MCF 10A (cell line): ENCODE measurements at regions of chr7 and their contacts with region 1.

Region 1: DNA sequence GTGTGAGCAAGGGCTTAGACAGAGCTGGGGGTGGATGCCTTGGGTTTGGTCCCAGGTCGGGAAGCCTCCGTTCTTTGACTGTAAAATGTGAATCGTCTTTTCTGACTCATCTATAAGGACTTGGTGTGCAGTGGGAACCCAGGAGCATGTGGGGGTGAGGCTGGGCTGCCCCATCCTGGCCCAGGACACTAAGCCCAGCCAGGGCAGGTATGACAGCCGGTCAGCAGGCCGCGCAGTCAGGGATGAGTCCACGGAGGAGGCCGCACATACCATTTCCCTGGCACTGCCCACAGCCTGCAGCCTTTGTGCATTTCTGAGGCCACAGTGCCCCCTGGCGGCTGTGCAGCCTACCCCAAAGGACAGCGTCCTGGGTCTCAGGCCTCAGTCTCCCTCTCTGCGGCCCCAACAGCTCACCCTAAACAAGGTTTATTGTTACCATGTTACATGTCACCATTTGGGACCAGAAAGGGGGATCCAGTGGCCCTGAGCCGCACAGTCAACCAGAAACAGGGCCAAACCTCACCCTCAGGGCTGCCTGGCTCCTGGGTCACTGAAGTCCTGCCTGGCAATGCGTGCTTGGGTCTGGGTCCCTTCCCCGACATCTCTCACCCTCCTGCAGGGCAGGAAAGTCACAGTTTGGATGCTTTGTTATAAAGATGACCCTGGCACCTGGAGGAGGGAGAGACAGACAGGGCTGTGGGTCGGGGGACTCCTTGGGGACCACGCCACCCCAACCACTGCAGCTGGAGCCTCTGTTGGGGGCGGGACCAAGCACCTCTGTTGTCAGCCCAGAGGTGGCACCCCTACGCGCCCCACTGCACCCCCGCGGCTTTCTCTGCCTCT is 14.4 kb upstream of the SH2B2 start:
- DNase-seq: peak; percentile 84
- H3K4me3 Mint-ChIP-seq: no peak overlapping the region
- H3K27ac Mint-ChIP-seq: no peak overlapping the region
- H3K4me1 Mint-ChIP-seq: peaks cover 13% of the 10 kb centered on the region
- H3K27me3 Mint-ChIP-seq: peaks cover 14% of the 10 kb centered on the region
- CTCF ChIP-seq: peak; percentile 94

Region 2: GRCh38 chr7:101542527-101543241 is 729.6 kb before region 1 on chr7:
- CTCF ChIA-PET with region 1: interaction called, 77 read pairs
- POLR2A ChIA-PET with region 1: no interaction called
- intact Hi-C with region 1: loop called (anchors 1 kb)
- DNase-seq: peak; percentile 73
- H3K4me3 Mint-ChIP-seq: no peak overlapping the region
- H3K27ac Mint-ChIP-seq: no peak overlapping the region
- H3K4me1 Mint-ChIP-seq: peaks cover 1% of the 10 kb centered on the region
- H3K27me3 Mint-ChIP-seq: no peaks in the 10 kb centered on the region
- CTCF ChIP-seq: peak; percentile 92

Region 3: DNA sequence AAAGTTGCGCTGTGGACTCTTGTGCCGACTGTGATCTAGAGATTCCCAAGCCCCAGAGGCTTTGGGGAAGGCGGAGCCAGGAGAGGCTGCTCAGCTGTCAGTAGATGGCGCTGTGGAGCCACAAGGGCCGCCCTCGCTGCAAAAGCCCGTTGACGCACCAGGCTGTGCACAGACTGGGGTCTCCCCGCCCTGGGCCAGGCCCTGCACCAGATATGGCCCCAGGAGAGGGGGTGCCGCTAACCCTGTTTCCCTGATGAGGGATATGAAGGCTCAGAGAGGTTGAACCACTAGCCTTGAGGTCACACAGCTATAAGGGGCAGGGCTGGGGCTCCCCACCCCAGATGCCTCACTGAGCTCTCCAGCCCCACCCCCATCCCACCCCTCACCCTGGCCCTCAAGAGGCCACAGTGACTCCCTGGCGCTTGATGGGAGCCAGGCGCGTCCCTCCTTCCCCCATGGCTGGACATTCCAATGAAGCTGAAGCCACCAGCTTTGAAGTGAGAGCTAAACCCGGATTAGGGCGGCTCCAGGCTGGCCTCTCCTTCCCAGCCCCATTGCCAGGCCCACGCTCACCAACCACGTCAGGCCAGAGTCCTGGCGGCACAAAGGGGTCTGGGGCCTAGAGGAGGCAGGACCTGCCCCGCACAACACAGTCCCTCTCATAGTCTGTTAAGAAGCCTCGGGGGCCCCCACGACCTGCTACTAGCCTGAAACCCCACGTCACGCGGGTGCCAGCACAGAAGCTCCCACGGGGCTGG is 669.6 kb before region 1 on chr7:
- CTCF ChIA-PET with region 1: interaction called, 14 read pairs
- POLR2A ChIA-PET with region 1: no interaction called
- intact Hi-C with region 1: no loop called
- DNase-seq: peak; percentile 74
- H3K4me3 Mint-ChIP-seq: no peak overlapping the region
- H3K27ac Mint-ChIP-seq: no peak overlapping the region
- H3K4me1 Mint-ChIP-seq: no peaks in the 10 kb centered on the region
- H3K27me3 Mint-ChIP-seq: no peaks in the 10 kb centered on the region
- CTCF ChIP-seq: peak; percentile 92

Region 4: DNA sequence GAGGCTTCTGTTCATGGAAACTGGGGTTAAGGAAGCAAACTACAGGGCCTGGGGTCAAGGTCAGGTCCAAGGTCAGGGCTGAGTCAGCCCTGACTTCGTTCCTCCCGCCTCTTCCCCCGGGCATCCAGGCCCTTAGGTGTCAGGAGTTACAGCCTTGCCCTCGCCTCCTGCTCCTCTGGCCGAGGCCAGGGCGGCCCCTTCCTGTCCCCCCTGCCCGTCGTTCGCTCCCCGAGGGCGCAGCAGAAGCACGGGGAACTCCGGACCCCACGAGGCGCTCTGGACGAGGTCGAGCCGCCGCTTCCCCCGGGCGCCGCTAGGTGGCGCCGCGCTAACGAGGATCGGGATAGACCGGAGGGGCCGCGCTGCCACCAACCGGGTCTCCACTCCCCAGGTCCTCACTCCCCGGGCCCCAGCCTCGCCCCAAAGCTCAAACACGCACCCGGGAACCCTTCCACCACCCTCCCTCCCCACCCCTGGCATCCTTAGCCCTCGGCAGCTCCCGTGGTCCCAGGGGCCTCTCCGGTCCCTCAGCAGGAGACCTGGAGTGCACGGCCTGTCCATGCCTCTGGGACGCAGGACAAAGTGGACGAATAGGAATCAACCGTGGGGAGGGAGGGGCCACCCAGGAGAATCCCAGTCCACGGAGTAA is 584.0 kb before region 1 on chr7:
- CTCF ChIA-PET with region 1: interaction called, 6 read pairs
- POLR2A ChIA-PET with region 1: no interaction called
- intact Hi-C with region 1: loop called (anchors 2 kb)
- DNase-seq: peak; percentile 66
- H3K4me3 Mint-ChIP-seq: no peak overlapping the region
- H3K27ac Mint-ChIP-seq: no peak overlapping the region
- H3K4me1 Mint-ChIP-seq: no peaks in the 10 kb centered on the region
- H3K27me3 Mint-ChIP-seq: no peaks in the 10 kb centered on the region
- CTCF ChIP-seq: peak; percentile 95